ENCODE measurements at regions of chr2 and their contacts with region 1.

Region 1: GRCh38 chr2:34012715-34013302 is 413.7 kb upstream of the FAM98A start:
- DNase-seq: peak; percentile 41
- H3K4me3 ChIP-seq: no peak overlapping the region
- H3K27ac ChIP-seq: no peak overlapping the region
- H3K4me1 ChIP-seq: no peaks in the 10 kb centered on the region
- H3K27me3 ChIP-seq: no peaks in the 10 kb centered on the region
- CTCF ChIP-seq: peak; percentile 62 to 66
- POLR2A ChIP-seq: no peak

Region 2: DNA sequence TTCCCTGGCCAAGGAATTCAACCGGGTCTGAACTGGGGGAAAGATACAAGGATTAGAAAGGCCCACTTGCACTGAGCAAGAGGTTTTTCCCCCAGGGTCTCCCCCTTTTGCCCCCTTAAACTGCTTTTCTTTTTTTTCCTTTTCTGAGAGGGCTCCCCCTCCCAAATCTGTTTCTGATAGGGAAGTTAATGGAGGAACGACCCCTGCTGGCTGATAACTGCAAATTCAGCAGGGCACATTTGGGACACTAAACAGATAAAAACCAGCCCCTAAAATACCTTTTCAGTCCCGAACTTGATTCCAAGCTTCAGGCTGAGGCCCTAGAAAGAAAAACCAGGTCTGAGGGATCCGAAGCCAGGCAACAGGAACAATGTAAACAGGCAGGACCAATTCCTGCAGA is 1330.3 kb after region 1 on chr2:
- CTCF ChIA-PET with region 1: no interaction called
- POLR2A ChIA-PET with region 1: no interaction called
- dilution Hi-C with region 1: no loop called
- intact Hi-C with region 1: loop called (anchors 1 kb)
- DNase-seq: peak; percentile 2
- H3K4me3 ChIP-seq: no peak overlapping the region
- H3K27ac ChIP-seq: no peak overlapping the region
- H3K4me1 ChIP-seq: no peaks in the 10 kb centered on the region
- H3K27me3 ChIP-seq: no peaks in the 10 kb centered on the region
- CTCF ChIP-seq: peak; percentile 32 to 43
- POLR2A ChIP-seq: no peak

Measured in endothelial cell of umbilical vein (primary cell).